Heart right ventricle (tissue), 16 donors: ENCODE measurements at regions of chr17 and their contacts with region 1.

Region 1: GRCh38 chr17:39026980-39027451 is 59.8 kb upstream of the FBXO47 start:
- DNase-seq: peak; percentile 73 to 82
- ATAC-seq: peak; percentile 79 to 95 (median 93)
- H3K4me3 ChIP-seq: peak overlapping the region; percentile 35 to 66 (median 51)
- H3K27ac ChIP-seq: peak overlapping the region in 7 of 10 donors; percentile 15 to 74 (median 67)
- H3K4me1 ChIP-seq: peaks cover 0 to 20% (median 6%) of the 10 kb centered on the region in 9 donors
- H3K27me3 ChIP-seq: peaks cover 0 to 20% (median 0%) of the 10 kb centered on the region in 7 donors
- CTCF ChIP-seq: peak in 1 of 9 donors; percentile 13

Region 2: GRCh38 chr17:38994026-38994425 is 33.0 kb before region 1 on chr17:
- intact Hi-C with region 1: loop called in 1 of 10 experiments (anchors 5 kb)
- DNase-seq: no peak
- ATAC-seq: peak in 5 of 8 donors; percentile 56 to 68 (median 61)
- H3K4me3 ChIP-seq: no peak overlapping the region
- H3K27ac ChIP-seq: peak overlapping the region in 4 of 10 donors; percentile 10 to 68 (median 39)
- H3K4me1 ChIP-seq: peaks cover 0 to 20% (median 6%) of the 10 kb centered on the region in 9 donors
- H3K27me3 ChIP-seq: no peaks in the 10 kb centered on the region
- CTCF ChIP-seq: no peak